Prostate gland (tissue), 2 donors: ENCODE measurements at regions of chr1 and their contacts with region 1.

Region 1: DNA sequence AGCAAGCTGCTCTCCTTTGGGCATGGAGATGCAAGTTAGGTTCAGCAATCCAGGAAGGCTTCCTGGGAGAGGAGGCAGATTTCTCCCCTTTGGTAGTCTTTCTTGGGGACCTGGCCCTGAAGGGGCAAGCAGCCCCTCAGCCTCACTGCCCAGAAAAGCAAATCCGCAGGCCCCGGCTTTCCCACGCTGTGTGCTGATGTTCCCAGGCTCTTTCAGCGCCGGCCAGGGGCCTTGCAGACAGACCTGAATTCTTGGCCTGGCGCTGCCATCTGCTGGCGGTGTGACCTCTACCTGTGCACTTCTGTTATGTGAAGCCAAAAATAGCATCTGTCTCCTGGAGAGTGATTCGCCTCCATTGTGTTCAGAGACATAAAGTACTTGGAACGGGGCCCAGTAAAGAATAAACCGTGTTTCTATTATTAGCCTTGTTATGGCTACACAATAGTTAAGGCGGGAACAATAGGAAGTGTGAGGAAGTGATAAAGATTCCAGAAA is 64.8 kb downstream of the ALPL start:
- DNase-seq: peak; percentile 81
- H3K4me3 ChIP-seq: no peak overlapping the region
- H3K27ac ChIP-seq: peak overlapping the region; percentile 32 to 45
- H3K4me1 ChIP-seq: no peaks in the 10 kb centered on the region
- H3K27me3 ChIP-seq: no peaks in the 10 kb centered on the region
- CTCF ChIP-seq: peak in 3 of 4 experiments; percentile 46 to 75 (median 68)
- POLR2A ChIP-seq: no peak

Region 2: GRCh38 chr1:21397813-21398188 is 176.2 kb before region 1 on chr1:
- intact Hi-C with region 1: loop called (anchors 10 kb)
- DNase-seq: no peak
- H3K4me3 ChIP-seq: no peak overlapping the region
- H3K27ac ChIP-seq: no peak overlapping the region
- H3K4me1 ChIP-seq: no peaks in the 10 kb centered on the region
- H3K27me3 ChIP-seq: peaks cover 2% of the 10 kb centered on the region
- CTCF ChIP-seq: no peak
- POLR2A ChIP-seq: no peak

Region 3: DNA sequence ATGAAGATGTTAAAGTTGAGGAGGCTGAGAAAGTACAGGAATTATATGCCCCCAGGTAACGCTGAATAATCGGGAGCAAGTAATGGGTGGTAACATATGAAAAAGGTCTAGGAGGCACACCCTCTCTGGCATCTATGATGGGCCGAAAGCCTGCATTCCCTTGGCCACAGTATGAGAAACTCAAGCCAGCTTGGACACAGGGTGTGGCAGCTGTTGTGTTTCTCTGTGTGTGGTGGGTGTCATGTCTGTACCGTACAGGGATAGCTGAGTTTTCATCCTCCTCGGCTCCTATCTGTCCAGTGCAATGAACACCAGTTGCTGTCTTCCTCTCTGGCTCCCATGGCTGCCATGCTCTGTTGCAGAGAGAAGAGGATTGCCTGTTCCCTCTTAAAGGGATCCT is 101.2 kb before region 1 on chr1:
- intact Hi-C with region 1: no loop called
- DNase-seq: no peak
- H3K4me3 ChIP-seq: no peak overlapping the region
- H3K27ac ChIP-seq: no peak overlapping the region
- H3K4me1 ChIP-seq: no peaks in the 10 kb centered on the region
- H3K27me3 ChIP-seq: no peaks in the 10 kb centered on the region
- CTCF ChIP-seq: no peak
- POLR2A ChIP-seq: no peak

Region 4: DNA sequence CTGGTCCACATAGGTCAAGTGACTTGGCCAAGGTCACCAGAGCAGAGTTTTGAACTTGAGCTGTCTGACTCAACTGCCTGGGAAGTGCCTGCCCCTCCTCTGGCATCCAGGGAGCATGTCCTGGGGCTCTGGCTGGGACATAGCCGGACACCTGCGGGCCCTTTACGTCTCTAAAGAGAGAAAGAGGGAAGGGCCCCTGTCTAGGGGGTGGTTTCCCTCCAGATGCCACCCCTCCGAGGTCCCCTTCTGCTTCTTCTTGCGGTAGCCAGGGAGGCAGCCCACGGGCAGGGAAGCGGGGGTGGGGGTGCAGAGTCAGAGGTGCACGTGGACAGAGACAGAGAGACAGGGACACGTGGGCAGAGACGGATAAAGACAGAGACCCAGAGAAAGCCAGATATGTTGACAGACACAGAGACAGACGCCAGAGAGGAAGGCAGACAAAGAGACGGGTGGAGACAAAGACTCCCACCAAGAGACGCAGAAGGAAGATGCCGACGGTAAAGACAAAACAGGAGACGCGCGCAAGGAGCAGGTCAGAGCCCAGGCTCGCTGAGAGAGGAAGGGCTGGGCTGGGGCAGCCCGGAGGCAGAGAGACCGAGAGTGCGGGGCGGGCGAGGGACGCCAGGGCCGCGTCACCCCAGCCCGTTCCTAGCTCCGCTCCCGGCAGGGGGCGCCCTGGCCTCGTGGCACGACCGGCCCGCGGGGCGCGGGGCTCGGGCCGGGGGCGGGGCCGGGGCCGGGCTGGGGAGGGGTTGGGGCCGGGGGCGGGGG is 65.3 kb before region 1 on chr1:
- intact Hi-C with region 1: loop called (anchors 5 kb)
- DNase-seq: peak; percentile 44
- H3K4me3 ChIP-seq: peak overlapping the region in 1 of 2 donors; percentile 22
- H3K27ac ChIP-seq: no peak overlapping the region
- H3K4me1 ChIP-seq: no peaks in the 10 kb centered on the region
- H3K27me3 ChIP-seq: no peaks in the 10 kb centered on the region
- CTCF ChIP-seq: peak; percentile 49 to 65 (median 60)
- POLR2A ChIP-seq: no peak

Region 5: GRCh38 chr1:21696931-21697330 is 122.9 kb after region 1 on chr1:
- intact Hi-C with region 1: no loop called
- DNase-seq: no peak
- H3K4me3 ChIP-seq: no peak overlapping the region
- H3K27ac ChIP-seq: no peak overlapping the region
- H3K4me1 ChIP-seq: no peaks in the 10 kb centered on the region
- H3K27me3 ChIP-seq: no peaks in the 10 kb centered on the region
- CTCF ChIP-seq: no peak
- POLR2A ChIP-seq: no peak